ENCODE measurements at regions of chr12 and their contacts with region 1.

Region 1: DNA sequence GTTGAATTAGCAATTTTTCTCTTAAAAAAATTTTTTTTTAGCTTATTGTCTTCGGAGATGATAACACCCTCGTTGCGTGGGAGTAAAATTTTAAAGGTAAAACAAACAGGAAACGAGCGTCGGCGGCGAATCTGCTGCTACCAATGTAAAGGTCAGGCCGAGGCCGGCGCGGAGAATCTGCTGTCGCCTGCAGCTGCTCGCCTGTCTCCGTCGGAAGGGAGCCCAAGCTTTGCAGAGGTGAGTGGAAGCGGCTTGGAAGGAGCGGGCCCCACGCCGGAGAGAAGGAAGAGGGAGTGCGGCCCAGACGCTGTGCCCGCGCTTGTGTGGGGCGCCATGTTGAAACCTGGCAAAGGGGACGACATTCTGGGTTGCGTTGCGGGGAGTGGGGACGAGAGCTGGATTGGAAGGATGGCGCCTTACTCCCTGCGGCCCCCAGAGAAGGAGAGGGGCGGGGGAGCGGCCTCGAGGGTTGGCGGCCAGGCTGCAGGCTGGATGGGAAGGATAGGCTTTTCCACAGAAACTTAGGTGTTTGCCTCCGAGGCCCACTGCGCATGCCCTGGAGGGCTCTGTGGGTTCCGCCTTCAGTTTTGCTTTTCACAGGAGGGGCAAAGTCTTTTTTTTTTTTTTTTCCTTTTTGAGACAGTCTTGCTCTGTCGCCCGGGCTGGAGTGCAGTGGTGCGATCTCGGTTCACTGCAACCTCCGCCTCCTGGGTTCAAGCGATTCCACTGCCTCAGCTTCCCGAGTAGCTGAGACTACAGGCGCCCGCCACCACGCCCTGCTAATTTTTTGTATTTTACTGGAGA is at the start of gene SNRNP35:
- DNase-seq: peak; percentile 79 to 92 (median 88)
- ATAC-seq: peak; percentile 85
- H3K4me3 ChIP-seq: peak within 1 kb of the TSS; percentile 97
- H3K4me3 Mint-ChIP-seq: peak within 1 kb of the TSS; percentile 92 to 100 (median 99)
- H3K27ac ChIP-seq: peak within 1 kb of the TSS; percentile 99
- H3K27ac Mint-ChIP-seq: peak within 1 kb of the TSS; percentile 100
- H3K4me1 ChIP-seq: peaks cover 14 to 18% of the 10 kb centered on the region in 2 donors
- H3K4me1 Mint-ChIP-seq: peaks cover 21 to 45% (median 26%) of the 10 kb centered on the region in 7 donors
- H3K27me3 ChIP-seq: no peaks in the 10 kb centered on the region
- H3K27me3 Mint-ChIP-seq: no peaks in the 10 kb centered on the region
- total RNA-seq, gene SNRNP35: 30.2 to 53.4 (median 35.8) TPM

Region 2: GRCh38 chr12:123271001-123271729 is 187.0 kb before region 1 on chr12:
- CTCF ChIA-PET with region 1: no interaction called
- POLR2A ChIA-PET with region 1: no interaction called
- intact Hi-C with region 1: loop called in 1 of 2 experiments (anchors 1 kb)
- DNase-seq: peak; percentile 55 to 84 (median 68)
- ATAC-seq: peak; percentile 88
- H3K4me3 ChIP-seq: no peak overlapping the region
- H3K4me3 Mint-ChIP-seq: peak overlapping the region in 1 of 10 donors; percentile 87
- H3K27ac ChIP-seq: no peak overlapping the region
- H3K27ac Mint-ChIP-seq: no peak overlapping the region
- H3K4me1 ChIP-seq: peaks cover 12 to 18% of the 10 kb centered on the region in 2 donors
- H3K4me1 Mint-ChIP-seq: peaks cover 7 to 30% (median 20%) of the 10 kb centered on the region in 7 donors
- H3K27me3 ChIP-seq: no peaks in the 10 kb centered on the region
- H3K27me3 Mint-ChIP-seq: no peaks in the 10 kb centered on the region

Region 3: DNA sequence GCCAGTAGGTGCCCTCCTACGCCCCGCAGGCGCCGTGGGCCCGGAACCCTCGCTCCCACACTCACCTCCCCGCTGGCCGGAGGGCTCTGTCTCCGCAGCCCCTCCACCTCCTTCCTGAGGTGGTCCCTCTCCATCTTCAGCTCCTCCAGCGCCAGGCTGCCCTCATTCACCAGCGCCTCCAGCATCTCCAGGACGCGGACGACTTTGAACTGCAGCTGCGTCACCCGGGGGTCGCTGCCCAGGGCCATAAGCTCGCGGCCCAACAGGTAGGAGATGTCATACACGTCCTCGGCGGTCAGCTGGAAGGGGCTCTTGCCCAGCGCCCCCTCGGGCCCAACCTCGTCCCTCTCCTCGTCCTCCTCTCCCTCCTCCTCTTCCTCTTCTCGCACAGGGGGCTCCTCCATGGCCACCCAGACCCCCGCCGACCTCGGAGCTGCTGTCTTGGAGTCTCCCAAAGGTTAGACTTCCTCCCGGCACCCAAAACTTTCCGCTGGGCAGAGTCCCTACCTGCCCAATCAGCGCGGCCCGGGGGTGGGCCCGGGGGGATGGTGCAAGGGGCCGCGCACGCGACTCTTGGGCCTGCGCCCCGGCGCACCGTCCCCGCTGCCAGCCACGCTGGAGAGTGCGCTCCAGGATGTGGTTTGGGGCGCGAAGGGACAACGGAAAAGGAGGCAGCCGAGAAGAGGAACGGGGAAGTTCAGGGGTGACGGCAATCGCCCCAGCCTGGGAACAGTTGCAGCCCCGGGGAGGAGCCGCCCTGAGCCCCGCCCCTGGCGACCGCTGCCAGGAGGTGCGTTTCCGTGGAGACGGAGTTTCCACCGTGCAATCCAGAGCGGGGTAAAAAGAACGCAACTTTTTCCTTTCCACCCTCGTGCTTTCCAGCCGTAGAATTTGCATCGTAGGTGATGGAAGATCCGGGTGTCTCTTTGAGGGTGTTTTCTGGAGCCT is 21.9 kb before region 1 on chr12 and contains the start of gene RILPL2:
- CTCF ChIA-PET with region 1: no interaction called
- POLR2A ChIA-PET with region 1: interaction called, 44 read pairs
- intact Hi-C with region 1: loop called (anchors 1 kb)
- DNase-seq: peak; percentile 79 to 96 (median 88)
- ATAC-seq: peak; percentile 91
- H3K4me3 ChIP-seq: peak within 1 kb of the TSS; percentile 96
- H3K4me3 Mint-ChIP-seq: peak within 1 kb of the TSS; percentile 85 to 97 (median 93)
- H3K27ac ChIP-seq: peak within 1 kb of the TSS; percentile 88
- H3K27ac Mint-ChIP-seq: peak within 1 kb of the TSS; percentile 77 to 96 (median 88)
- H3K4me1 ChIP-seq: peaks cover 11 to 29% of the 10 kb centered on the region in 2 donors
- H3K4me1 Mint-ChIP-seq: peaks cover 24 to 47% (median 33%) of the 10 kb centered on the region in 7 donors
- H3K27me3 ChIP-seq: no peaks in the 10 kb centered on the region
- H3K27me3 Mint-ChIP-seq: no peaks in the 10 kb centered on the region
- total RNA-seq, gene RILPL2: 4.3 to 12.8 (median 5.6) TPM

Region 4: DNA sequence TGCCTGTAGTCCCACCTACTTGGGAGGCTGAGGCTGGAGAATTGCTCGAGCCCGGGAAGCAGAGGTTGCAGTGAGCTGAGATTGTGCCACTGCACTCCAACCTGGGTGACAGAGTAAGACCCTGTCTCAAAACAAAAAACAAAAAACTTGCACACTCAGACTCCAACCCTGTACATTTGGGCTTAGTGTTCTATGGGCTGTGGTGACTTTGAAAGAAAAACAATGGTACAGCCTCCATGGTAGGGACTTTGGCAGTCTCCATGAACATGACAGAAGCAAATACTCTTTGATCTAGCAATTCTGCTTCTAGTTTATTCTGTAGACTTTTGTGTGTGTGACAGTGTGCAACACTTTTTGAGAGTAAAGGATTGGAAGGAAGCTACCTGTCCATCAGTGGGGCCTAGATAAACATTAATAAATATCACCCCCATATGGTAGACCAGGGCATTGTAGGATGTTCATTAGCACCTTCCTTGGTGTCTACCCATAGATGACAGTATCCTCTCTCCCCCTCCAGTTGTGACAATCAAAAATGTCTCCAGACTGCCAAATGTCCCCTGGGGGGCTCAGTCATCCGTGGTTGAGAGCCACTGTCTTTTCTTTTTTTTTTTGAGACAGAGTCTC is 10.5 kb after region 1 on chr12:
- CTCF ChIA-PET with region 1: interaction called, 13 read pairs
- POLR2A ChIA-PET with region 1: interaction called, 64 read pairs
- intact Hi-C with region 1: no loop called
- DNase-seq: peak in 1 of 9 donors; percentile 4
- ATAC-seq: peak; percentile 75
- H3K4me3 ChIP-seq: no peak overlapping the region
- H3K4me3 Mint-ChIP-seq: no peak overlapping the region
- H3K27ac ChIP-seq: no peak overlapping the region
- H3K27ac Mint-ChIP-seq: peak overlapping the region in 1 of 9 donors; percentile 45
- H3K4me1 ChIP-seq: no peaks in the 10 kb centered on the region
- H3K4me1 Mint-ChIP-seq: peaks cover 0 to 34% (median 18%) of the 10 kb centered on the region in 7 donors
- H3K27me3 ChIP-seq: no peaks in the 10 kb centered on the region
- H3K27me3 Mint-ChIP-seq: no peaks in the 10 kb centered on the region

Region 5: DNA sequence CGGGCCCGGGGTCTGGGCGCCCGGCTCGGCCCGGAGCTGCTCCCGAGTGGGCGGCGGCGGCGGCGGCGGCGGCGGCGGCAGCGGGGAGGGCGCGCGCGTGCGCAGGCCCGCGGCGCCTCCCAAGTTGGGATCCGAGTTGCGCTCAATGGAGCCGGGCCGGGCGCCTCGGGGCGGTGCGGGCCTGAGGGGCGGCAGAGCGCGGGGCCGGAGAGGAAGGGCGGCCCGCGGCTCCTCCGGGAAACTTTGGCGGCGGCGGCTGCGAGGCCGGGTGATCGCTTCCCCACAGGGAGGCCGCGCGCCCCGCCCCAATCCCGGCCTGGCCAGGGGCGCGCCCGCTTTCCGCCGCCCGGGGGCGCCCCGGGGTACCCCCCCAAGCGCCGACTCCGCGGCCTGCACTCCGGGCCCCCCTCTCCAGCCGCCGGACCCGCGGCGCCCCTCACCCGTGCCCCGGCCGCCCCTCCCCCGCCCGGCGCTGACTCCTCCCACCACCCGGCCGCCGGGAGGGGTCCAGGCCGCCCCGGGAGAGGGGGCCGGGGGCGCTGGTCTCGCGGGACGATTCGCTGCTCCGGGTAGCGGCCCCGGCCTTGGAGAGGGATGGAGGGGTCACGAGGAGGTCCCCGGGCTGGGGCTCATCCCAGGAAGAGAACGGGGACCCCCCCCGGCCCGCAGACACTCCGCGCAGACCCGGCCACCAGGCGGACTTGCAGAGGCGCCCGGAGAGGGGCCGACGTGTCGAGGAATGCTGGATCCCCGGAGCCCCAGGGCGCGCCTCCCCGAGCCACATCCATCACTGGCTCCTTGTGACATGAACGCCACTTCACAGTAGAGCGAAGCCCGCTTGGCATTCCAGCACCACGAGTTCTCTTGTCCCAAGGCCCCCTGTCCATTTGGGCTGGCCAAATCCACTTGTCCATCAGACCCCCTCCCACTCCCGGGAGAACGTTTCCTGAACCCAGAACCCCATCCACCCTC is 75.8 kb after region 1 on chr12 and contains the start of gene RILPL1:
- CTCF ChIA-PET with region 1: no interaction called
- POLR2A ChIA-PET with region 1: interaction called, 5 read pairs
- intact Hi-C with region 1: loop called in 1 of 2 experiments (anchors 1 kb)
- DNase-seq: peak; percentile 16 to 70 (median 47)
- ATAC-seq: peak; percentile 86
- H3K4me3 ChIP-seq: peak within 1 kb of the TSS; percentile 65
- H3K4me3 Mint-ChIP-seq: peak within 1 kb of the TSS; percentile 83 to 91 (median 88)
- H3K27ac ChIP-seq: peak within 1 kb of the TSS; percentile 61
- H3K27ac Mint-ChIP-seq: peak within 1 kb of the TSS; percentile 60 to 95 (median 79)
- H3K4me1 ChIP-seq: peaks cover 11 to 18% of the 10 kb centered on the region in 2 donors
- H3K4me1 Mint-ChIP-seq: peaks cover 11 to 25% (median 16%) of the 10 kb centered on the region in 7 donors
- H3K27me3 ChIP-seq: no peaks in the 10 kb centered on the region
- H3K27me3 Mint-ChIP-seq: peaks cover 0 to 22% (median 0%) of the 10 kb centered on the region in 5 donors
- total RNA-seq, gene RILPL1: 1.5 to 9.2 (median 3.9) TPM